ENCODE measurements at regions of chr6 and their contacts with region 1.

Region 1: GRCh38 chr6:99588618-99589289 is 17.9 kb upstream of the PRDM13 start:
- DNase-seq: peak; percentile 86
- ATAC-seq: peak; percentile 96
- H3K4me3 Mint-ChIP-seq: peak overlapping the region; percentile 70
- H3K27ac Mint-ChIP-seq: peak overlapping the region; percentile 37
- H3K4me1 Mint-ChIP-seq: peaks cover 17% of the 10 kb centered on the region
- H3K27me3 Mint-ChIP-seq: peaks cover 55% of the 10 kb centered on the region

Region 2: DNA sequence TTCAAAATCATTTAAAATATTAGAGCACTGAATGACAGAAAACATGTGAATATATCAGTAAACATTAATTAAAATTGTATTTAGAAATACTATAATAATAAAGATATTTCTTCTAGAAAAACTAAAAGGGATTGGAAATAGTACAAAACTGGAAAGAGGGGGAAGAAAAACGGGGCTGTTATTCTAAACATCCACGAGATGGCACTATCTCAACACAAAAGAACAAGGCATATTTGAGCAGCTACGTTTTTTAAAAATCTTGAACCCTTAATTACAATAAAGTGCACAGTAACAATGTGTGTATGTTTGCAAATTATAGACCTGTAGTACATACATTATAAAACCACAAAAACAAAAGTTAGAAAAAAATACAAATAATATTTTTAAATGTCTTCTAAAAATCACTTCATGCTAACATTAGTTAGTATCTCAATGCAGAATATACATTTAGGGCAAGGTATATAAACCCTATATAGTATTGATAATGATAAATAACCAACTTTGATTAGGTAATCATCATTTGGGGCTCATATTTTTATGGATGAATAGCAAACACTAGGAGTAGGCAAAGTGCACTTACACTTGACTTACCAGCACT is 121.1 kb before region 1 on chr6:
- CTCF ChIA-PET with region 1: interaction called, 4 read pairs
- POLR2A ChIA-PET with region 1: no interaction called
- intact Hi-C with region 1: loop called in 1 of 2 experiments (anchors 1 kb)
- DNase-seq: no peak
- ATAC-seq: no peak
- H3K4me3 Mint-ChIP-seq: no peak overlapping the region
- H3K27ac Mint-ChIP-seq: no peak overlapping the region
- H3K4me1 Mint-ChIP-seq: no peaks in the 10 kb centered on the region
- H3K27me3 Mint-ChIP-seq: no peaks in the 10 kb centered on the region

Region 3: DNA sequence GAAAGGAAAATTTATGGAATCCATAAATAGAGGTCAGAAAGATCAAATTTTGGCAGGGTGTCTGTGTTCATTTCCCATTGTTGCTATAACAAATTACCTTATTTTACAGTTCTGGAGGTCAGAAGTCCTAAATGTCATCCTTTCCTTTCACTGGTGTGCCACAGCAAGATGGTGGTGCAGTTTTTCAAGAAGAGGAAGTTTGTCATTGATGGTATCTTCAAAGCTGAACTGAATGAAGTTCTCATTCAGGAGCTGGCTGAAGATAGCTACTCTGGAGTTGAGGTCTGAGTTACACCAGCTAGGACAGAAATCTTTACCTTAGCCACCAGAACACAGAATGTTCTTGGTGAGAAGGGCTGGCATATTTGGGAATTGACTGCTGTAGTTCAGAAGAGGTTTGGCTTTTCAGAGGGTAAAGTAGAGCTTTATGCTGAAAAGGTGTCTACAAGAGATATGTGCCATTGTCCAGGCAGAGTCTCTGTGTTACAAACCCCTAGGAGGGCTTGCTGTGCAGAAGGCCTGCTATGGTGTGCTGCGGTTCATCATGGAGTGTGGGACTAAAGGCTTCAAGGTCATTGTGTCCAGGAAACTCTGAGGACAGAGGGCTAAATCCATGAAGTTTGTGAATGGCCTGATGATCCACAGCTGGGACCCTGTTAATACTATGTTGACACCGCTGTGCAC is 13.1 kb before region 1 on chr6:
- CTCF ChIA-PET with region 1: interaction called, 19 read pairs
- POLR2A ChIA-PET with region 1: no interaction called
- intact Hi-C with region 1: no loop called
- DNase-seq: no peak
- ATAC-seq: no peak
- H3K4me3 Mint-ChIP-seq: no peak overlapping the region
- H3K27ac Mint-ChIP-seq: no peak overlapping the region
- H3K4me1 Mint-ChIP-seq: no peaks in the 10 kb centered on the region
- H3K27me3 Mint-ChIP-seq: peaks cover 9% of the 10 kb centered on the region

Region 4: DNA sequence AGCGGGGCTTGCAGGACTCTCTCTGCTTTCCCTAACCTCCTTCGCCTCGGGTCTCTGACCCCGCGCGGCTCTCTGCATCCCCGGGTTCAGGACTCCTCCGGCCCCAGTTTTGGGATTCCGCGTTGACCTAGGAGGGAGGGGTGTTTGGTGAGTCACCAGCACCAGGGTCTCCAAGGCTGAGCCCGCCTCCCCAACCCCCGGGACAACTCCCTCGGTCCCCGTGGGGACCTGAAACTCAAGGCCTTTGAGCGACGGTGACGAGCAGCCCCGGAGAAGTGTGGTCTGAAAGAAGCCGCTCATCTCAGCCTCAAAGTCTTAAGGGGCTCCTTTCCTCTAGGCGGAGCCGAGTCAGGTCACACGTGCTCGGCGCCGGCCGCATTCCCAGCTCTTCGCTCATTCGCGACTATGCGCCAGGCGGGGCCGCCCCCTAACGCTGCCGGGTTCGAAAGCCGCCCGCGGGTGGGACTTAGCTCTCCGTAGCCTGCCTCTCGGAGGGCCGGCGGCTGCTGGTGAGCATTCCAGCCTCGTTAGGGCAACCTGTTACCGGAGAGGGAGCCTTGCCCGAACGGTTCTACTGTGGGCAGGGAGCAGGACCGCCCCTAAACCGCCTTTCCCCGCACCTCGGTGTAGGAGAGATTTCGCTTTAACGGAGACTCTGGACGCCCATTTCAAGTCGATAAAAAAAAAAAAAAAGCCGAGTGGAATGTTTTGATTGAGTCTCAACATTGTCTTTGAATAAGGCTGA is 14.8 kb after region 1 on chr6:
- CTCF ChIA-PET with region 1: interaction called, 6 read pairs
- POLR2A ChIA-PET with region 1: no interaction called
- intact Hi-C with region 1: loop called (anchors 1 to 2 kb)
- DNase-seq: peak; percentile 56
- ATAC-seq: peak; percentile 51
- H3K4me3 Mint-ChIP-seq: peak overlapping the region; percentile 51
- H3K27ac Mint-ChIP-seq: no peak overlapping the region
- H3K4me1 Mint-ChIP-seq: peaks cover 30% of the 10 kb centered on the region
- H3K27me3 Mint-ChIP-seq: peaks cover 79% of the 10 kb centered on the region

Region 5: GRCh38 chr6:99709062-99709461 is 120.3 kb after region 1 on chr6:
- CTCF ChIA-PET with region 1: no interaction called
- POLR2A ChIA-PET with region 1: no interaction called
- intact Hi-C with region 1: no loop called
- DNase-seq: no peak
- ATAC-seq: no peak
- H3K4me3 Mint-ChIP-seq: no peak overlapping the region
- H3K27ac Mint-ChIP-seq: no peak overlapping the region
- H3K4me1 Mint-ChIP-seq: no peaks in the 10 kb centered on the region
- H3K27me3 Mint-ChIP-seq: peaks cover 7% of the 10 kb centered on the region

Region 6: DNA sequence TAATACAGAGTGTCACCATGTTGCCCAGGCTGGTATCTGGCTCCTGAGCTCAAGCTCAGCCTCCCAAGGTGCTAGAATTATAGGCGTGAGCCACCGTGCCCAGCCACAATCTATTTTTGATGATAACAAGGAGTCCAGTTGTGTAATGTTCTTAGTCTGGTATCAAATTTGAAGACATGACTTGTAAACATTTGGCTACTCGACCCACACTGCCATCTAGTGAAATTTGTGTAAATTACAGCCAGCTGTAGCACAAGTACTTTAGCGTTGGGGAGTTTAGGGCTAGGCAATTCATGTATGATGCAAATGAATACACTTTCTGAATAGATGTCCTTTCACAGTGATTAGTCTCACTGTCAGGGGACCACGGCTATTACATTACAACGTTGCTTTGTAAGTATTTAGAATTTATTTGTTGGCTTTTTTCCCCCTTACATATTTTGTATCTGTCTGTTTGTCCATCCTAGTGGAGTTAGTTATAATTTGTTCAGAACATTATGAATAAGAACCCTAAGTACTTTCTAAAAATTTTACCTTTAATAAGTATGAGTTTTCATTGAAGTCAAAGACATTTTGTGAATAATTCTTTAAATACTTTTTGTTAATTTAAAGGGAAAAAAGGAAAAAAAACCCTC is 157.6 kb after region 1 on chr6:
- CTCF ChIA-PET with region 1: interaction called, 32 read pairs
- POLR2A ChIA-PET with region 1: no interaction called
- intact Hi-C with region 1: loop called (anchors 1 kb)
- DNase-seq: peak; percentile 61
- ATAC-seq: peak; percentile 73
- H3K4me3 Mint-ChIP-seq: no peak overlapping the region
- H3K27ac Mint-ChIP-seq: no peak overlapping the region
- H3K4me1 Mint-ChIP-seq: no peaks in the 10 kb centered on the region
- H3K27me3 Mint-ChIP-seq: peaks cover 21% of the 10 kb centered on the region

Region 7: GRCh38 chr6:99822741-99823512 is 234.2 kb after region 1 on chr6:
- CTCF ChIA-PET with region 1: interaction called, 5 read pairs
- POLR2A ChIA-PET with region 1: no interaction called
- intact Hi-C with region 1: loop called in 1 of 2 experiments (anchors 2 kb)
- DNase-seq: peak; percentile 7
- ATAC-seq: peak; percentile 49
- H3K4me3 Mint-ChIP-seq: peak overlapping the region; percentile 12
- H3K27ac Mint-ChIP-seq: no peak overlapping the region
- H3K4me1 Mint-ChIP-seq: peaks cover 7% of the 10 kb centered on the region
- H3K27me3 Mint-ChIP-seq: peaks cover 20% of the 10 kb centered on the region